ENCODE measurements at regions of chr7 and their contacts with region 1.

Region 1: DNA sequence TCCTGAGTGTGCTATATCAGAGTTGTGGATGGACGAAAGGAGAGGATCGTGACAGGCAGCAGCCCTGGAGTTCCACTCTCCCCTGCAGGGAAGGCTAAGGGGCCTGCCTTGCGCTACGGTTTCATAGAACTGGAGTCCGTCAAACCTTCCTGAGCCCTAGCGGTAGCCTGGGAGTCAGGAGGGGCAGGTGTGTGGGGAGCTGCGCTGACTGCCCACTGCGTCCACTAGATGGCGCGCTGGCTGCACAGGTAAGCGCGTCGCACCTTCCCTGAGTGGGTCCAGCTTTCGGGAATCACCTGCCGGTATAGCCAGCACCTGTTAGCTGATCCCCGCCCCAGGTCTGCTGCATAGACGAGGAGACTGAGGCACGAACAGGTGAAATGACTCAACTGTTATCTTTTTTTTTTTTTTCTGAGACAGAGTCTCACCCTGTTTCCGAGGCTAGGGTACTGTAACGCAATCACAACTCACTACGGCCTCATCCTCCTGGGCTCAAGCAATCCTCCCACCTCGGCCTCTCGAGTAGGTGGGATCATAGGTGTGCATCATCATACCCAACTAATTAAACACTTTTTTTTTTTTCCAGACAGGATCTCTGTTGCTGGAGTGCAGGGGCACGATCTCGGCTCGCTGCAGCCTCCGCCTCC is 20.2 kb upstream of the BAIAP2L1 start:
- DNase-seq: peak; percentile 16 to 60 (median 50)
- ATAC-seq: peak; percentile 80
- H3K4me3 ChIP-seq: no peak overlapping the region
- H3K4me3 Mint-ChIP-seq: no peak overlapping the region
- H3K27ac ChIP-seq: no peak overlapping the region
- H3K27ac Mint-ChIP-seq: no peak overlapping the region
- H3K4me1 ChIP-seq: no peaks in the 10 kb centered on the region
- H3K4me1 Mint-ChIP-seq: no peaks in the 10 kb centered on the region
- H3K27me3 ChIP-seq: no peaks in the 10 kb centered on the region
- H3K27me3 Mint-ChIP-seq: peaks cover 0 to 30% (median 9%) of the 10 kb centered on the region in 5 donors

Region 2: GRCh38 chr7:98831641-98832221 is 410.6 kb after region 1 on chr7:
- CTCF ChIA-PET with region 1: no interaction called
- POLR2A ChIA-PET with region 1: no interaction called
- intact Hi-C with region 1: no loop called
- DNase-seq: peak in 3 of 9 donors; percentile 14 to 43 (median 15)
- ATAC-seq: no peak
- H3K4me3 ChIP-seq: no peak overlapping the region
- H3K4me3 Mint-ChIP-seq: no peak overlapping the region
- H3K27ac ChIP-seq: no peak overlapping the region
- H3K27ac Mint-ChIP-seq: no peak overlapping the region
- H3K4me1 ChIP-seq: no peaks in the 10 kb centered on the region
- H3K4me1 Mint-ChIP-seq: peaks cover 0 to 2% (median 0%) of the 10 kb centered on the region in 7 donors
- H3K27me3 ChIP-seq: no peaks in the 10 kb centered on the region
- H3K27me3 Mint-ChIP-seq: peaks cover 0 to 8% (median 0%) of the 10 kb centered on the region in 5 donors

Region 3: DNA sequence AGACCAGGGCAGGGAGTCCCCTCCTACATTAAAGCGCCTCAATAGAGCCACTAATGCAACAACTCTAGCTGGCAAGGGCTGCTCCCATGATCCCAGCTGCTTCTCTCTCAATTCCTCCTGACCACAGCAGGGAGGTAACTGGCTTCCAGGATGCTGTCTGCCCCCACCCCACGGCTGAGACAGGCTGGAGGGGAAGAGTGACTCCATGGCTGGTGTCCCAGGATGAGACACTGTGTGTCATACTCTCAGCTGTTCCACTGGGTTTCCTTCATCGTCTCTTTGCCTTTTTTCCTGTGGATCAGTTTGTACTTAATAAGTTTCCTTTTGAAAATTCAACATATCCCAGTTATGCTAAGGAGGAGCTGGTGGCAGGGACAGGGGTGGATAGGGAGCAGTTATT is 823.9 kb after region 1 on chr7:
- CTCF ChIA-PET with region 1: no interaction called
- POLR2A ChIA-PET with region 1: no interaction called
- intact Hi-C with region 1: loop called in 1 of 2 experiments (anchors 5 kb)
- DNase-seq: no peak
- ATAC-seq: no peak
- H3K4me3 ChIP-seq: no peak overlapping the region
- H3K4me3 Mint-ChIP-seq: no peak overlapping the region
- H3K27ac ChIP-seq: no peak overlapping the region
- H3K27ac Mint-ChIP-seq: no peak overlapping the region
- H3K4me1 ChIP-seq: no peaks in the 10 kb centered on the region
- H3K4me1 Mint-ChIP-seq: peaks cover 0 to 2% (median 0%) of the 10 kb centered on the region in 7 donors
- H3K27me3 ChIP-seq: no peaks in the 10 kb centered on the region
- H3K27me3 Mint-ChIP-seq: peaks cover 0 to 16% (median 10%) of the 10 kb centered on the region in 5 donors

Measured in naive thymus-derived CD4-positive, alpha-beta T cell (primary cell).